ENCODE measurements at regions of chr10 and their contacts with region 1.

Region 1: DNA sequence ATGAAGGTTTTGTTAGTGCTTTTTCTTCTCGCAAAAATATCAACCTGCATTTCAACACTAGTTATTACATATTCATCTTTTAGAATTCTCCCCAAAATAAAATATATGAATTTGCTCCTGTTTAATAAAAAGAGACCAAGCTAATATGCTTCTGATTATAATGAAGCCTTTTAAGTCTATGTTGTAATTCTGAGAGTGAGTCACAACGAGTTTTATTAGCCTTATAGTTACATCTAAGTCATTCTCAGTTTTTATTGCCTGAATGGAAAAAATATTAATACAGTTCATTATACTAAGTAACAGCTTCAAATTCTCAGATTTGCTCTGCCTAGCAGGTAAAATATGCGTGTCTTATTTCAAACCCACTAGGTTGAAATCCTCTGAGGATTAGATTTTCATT is 152.4 kb upstream of the CELF2 start:
- DNase-seq: no peak
- H3K4me3 ChIP-seq: no peak overlapping the region
- H3K27ac ChIP-seq: no peak overlapping the region
- H3K4me1 ChIP-seq: no peaks in the 10 kb centered on the region
- H3K27me3 ChIP-seq: no peaks in the 10 kb centered on the region
- CTCF ChIP-seq: no peak
- POLR2A ChIP-seq: no peak

Region 2: GRCh38 chr10:10849306-10849705 is 16.0 kb before region 1 on chr10:
- intact Hi-C with region 1: loop called (anchors 2 kb)
- DNase-seq: no peak
- H3K4me3 ChIP-seq: no peak overlapping the region
- H3K27ac ChIP-seq: no peak overlapping the region
- H3K4me1 ChIP-seq: no peaks in the 10 kb centered on the region
- H3K27me3 ChIP-seq: no peaks in the 10 kb centered on the region
- CTCF ChIP-seq: no peak
- POLR2A ChIP-seq: no peak

Region 3: DNA sequence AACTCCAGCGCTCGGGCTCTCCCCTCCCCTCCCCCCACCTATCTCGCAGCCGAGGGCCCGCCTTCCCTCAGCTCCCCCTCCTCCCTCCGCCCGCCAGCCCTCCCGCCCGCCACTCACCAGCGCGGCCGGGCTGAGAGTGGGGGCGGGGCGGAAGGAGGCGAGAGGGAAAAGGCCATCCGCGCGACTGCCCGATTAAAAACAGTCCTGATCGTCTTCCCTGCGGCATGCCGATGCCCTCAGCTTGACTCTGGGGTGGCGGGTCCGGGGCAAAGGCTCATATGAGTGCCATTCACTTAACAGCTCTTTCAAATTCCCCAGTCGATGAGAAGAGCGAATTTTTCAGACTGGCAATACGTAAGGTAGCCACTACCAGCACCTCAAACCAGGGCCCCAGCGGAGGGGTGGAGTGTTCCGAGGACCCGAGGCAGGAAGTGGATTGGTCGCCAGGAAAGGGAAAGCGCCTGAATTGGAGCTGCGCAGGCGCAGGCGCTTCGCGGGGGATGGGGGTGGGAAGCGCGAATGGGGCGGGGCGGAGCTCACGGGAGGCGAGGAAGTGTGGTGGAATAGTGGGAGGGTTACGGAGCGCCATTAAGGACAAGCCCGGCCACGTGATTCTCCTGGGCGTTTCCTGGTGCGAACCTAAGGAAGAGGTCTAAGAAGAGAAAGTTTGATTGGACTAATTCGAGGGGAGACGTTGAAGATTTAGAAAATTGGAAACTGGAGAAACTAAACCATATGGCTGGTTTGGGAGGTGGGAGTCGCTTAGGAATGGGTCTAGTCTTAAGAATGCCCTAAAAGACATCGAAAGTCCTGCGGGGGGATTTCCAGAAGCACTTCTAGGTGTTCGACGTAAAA is 1177.7 kb after region 1 on chr10 and contains the start of gene UPF2:
- intact Hi-C with region 1: no loop called
- DNase-seq: peak; percentile 98 to 99
- H3K4me3 ChIP-seq: peak within 1 kb of the TSS; percentile 76 to 98 (median 96)
- H3K27ac ChIP-seq: peak within 1 kb of the TSS; percentile 98
- H3K4me1 ChIP-seq: no peaks in the 10 kb centered on the region
- H3K27me3 ChIP-seq: no peaks in the 10 kb centered on the region
- CTCF ChIP-seq: peak in 2 of 3 donors; percentile 27 to 31
- POLR2A ChIP-seq: peak; percentile 59
- total RNA-seq, gene UPF2: 22.4 to 32.9 (median 29.2) TPM

Measured in breast epithelium (tissue), 4 donors.